Heart left ventricle (tissue), 16 donors: ENCODE measurements at regions of chr10 and their contacts with region 1.

Region 1: GRCh38 chr10:27223964-27224363 is 16.6 kb downstream of the ACBD5 start:
- DNase-seq: peak in 1 of 5 donors; percentile 26
- ATAC-seq: peak in 2 of 4 donors; percentile 25 to 31
- H3K4me3 ChIP-seq: no peak overlapping the region
- H3K27ac ChIP-seq: no peak overlapping the region
- H3K4me1 ChIP-seq: no peaks in the 10 kb centered on the region
- H3K27me3 ChIP-seq: no peaks in the 10 kb centered on the region
- CTCF ChIP-seq: peak; percentile 26 to 71 (median 59)
- POLR2A ChIP-seq: no peak

Region 2: DNA sequence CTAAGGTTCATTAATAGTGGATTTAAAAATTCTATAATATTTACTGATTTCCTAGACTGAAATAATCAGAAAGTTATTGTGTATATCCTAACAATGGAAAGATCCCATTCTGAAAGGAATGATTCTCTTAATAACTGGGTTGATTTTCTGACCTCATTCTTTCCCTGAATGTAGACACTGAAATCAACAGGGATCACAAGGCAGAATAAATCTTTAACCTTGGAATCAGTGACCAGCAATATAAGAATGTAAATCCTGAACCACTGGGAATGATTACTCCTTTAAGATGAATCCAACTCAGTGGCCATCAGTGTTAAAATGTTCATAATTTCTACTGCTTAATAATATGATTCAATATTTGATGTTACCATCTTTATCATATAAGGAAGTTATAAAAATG is 171.3 kb before region 1 on chr10:
- intact Hi-C with region 1: loop called in 1 of 10 experiments (anchors 10 kb)
- DNase-seq: no peak
- ATAC-seq: no peak
- H3K4me3 ChIP-seq: no peak overlapping the region
- H3K27ac ChIP-seq: no peak overlapping the region
- H3K4me1 ChIP-seq: no peaks in the 10 kb centered on the region
- H3K27me3 ChIP-seq: no peaks in the 10 kb centered on the region
- CTCF ChIP-seq: no peak
- POLR2A ChIP-seq: no peak

Region 3: GRCh38 chr10:27134371-27134770 is 89.6 kb before region 1 on chr10:
- intact Hi-C with region 1: loop called in 1 of 10 experiments (anchors 10 kb)
- DNase-seq: no peak
- ATAC-seq: no peak
- H3K4me3 ChIP-seq: no peak overlapping the region
- H3K27ac ChIP-seq: no peak overlapping the region
- H3K4me1 ChIP-seq: no peaks in the 10 kb centered on the region
- H3K27me3 ChIP-seq: no peaks in the 10 kb centered on the region
- CTCF ChIP-seq: no peak
- POLR2A ChIP-seq: no peak

Region 4: DNA sequence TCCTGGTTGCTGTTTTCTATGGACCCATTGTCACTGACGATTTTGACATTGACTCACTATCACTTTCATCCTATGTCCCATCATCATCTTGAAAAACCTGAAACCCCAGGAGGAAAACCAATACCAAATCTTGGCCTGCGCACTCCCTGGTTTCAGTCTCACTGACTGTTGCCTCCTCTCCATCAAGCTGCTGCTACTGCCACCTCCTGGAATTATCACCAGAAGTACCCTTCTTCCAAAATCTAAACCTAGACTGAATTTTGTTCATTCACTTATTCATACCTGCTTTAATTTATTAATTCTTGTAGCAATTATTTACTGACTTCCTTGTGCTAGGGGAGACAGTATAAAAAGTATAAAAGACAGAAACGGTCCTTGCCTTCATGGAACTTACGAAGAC is 61.1 kb after region 1 on chr10:
- intact Hi-C with region 1: loop called in 4 of 10 experiments (anchors 2 to 5 kb)
- DNase-seq: peak in 1 of 5 donors; percentile 22
- ATAC-seq: peak in 3 of 4 donors; percentile 38 to 85 (median 65)
- H3K4me3 ChIP-seq: no peak overlapping the region
- H3K27ac ChIP-seq: no peak overlapping the region
- H3K4me1 ChIP-seq: no peaks in the 10 kb centered on the region
- H3K27me3 ChIP-seq: no peaks in the 10 kb centered on the region
- CTCF ChIP-seq: peak in 10 of 12 donors; percentile 33 to 58 (median 46)
- POLR2A ChIP-seq: no peak

Region 5: GRCh38 chr10:27360581-27361172 is 136.7 kb after region 1 on chr10:
- intact Hi-C with region 1: loop called in 6 of 10 experiments (anchors 2 to 10 kb)
- DNase-seq: peak; percentile 65 to 83 (median 67)
- ATAC-seq: peak; percentile 32 to 82 (median 74)
- H3K4me3 ChIP-seq: no peak overlapping the region
- H3K27ac ChIP-seq: no peak overlapping the region
- H3K4me1 ChIP-seq: no peaks in the 10 kb centered on the region
- H3K27me3 ChIP-seq: no peaks in the 10 kb centered on the region
- CTCF ChIP-seq: peak; percentile 60 to 83 (median 70)
- POLR2A ChIP-seq: no peak